ENCODE measurements at regions of chr7 and their contacts with region 1.

Region 1: DNA sequence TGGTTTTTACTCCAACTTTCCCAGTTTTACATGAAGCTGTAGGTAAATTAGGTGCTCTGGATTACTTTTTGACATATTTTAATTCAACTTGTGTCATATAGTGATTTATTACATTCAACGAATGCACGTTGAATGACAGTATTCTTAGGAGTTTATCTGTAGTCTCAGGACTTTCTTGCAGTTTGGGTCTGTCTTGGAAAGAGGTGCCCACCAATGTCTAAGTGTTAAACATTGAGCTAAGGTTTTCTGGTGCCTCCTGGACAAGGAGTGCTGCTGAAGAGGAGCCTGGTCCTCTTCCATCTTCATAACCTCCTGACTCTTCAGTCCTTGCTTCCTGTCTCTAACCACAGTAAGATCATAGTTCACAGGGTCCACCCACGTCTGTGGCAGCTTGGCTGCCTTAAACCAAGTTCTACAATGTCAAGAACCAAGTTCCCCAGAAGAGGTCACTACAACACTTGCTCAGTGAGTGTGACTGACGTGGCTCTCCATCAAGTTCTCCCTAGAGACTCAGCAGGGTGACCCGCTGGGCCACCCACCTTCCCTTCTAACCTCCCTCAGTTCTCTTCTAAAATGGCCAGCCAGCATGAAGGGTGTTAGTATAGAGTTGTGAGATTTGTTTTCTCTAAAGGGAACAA is 6.1 kb downstream of the NPY start:
- DNase-seq: peak; percentile 38 to 40
- H3K4me3 ChIP-seq: no peak overlapping the region
- H3K27ac ChIP-seq: no peak overlapping the region
- H3K4me1 ChIP-seq: peaks cover 0 to 2% of the 10 kb centered on the region in 2 donors
- H3K27me3 ChIP-seq: no peaks in the 10 kb centered on the region
- CTCF ChIP-seq: peak in 5 of 6 experiments; percentile 17 to 62 (median 58)
- POLR2A ChIP-seq: no peak

Region 2: DNA sequence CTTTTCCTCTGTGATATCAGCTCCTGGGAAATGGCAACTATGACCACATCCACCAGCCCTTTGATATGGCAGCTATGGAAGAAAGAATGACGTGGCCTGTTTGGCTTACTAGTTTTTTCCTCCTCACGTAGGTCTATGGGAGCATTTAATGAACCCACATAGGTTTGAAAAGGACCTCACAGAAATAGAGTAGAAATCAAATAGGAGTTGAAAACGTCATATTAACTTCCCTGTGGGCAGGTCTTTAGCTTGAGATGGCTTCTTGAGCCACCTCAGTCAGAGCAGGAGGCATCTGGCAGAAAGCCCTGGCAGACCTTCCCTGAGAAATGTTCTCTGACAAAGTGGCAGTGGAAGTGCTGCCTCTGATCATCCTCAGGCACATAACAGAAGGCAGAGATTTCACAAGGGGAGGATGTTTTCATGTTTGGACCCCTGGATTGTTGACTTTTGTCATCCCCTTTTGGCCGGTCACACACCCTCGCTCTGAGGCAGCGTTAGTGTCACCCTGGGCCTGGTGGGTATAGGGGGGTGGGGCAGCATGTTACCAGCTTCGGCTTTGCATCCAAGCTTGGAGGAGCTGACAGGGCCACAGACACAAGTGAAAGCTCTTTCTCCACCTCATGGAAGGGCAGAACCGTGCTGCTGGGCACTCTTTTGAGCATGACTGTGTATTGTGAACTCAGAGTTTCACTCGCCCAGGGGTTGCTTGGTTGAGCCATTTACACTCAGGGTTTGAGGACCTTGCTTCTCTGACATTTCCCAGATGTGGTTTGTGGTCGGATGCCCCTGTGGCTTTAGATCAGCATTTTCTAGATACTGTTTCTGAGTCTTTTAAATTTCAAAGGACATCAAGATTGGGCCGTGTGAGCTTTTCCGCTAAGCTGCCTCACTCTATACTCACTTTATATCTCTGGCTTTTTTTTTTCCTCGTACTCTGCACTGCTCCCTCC is 395.9 kb before region 1 on chr7:
- intact Hi-C with region 1: no loop called
- DNase-seq: no peak
- H3K4me3 ChIP-seq: no peak overlapping the region
- H3K27ac ChIP-seq: no peak overlapping the region
- H3K4me1 ChIP-seq: no peaks in the 10 kb centered on the region
- H3K27me3 ChIP-seq: no peaks in the 10 kb centered on the region
- CTCF ChIP-seq: no peak
- POLR2A ChIP-seq: no peak

Region 3: DNA sequence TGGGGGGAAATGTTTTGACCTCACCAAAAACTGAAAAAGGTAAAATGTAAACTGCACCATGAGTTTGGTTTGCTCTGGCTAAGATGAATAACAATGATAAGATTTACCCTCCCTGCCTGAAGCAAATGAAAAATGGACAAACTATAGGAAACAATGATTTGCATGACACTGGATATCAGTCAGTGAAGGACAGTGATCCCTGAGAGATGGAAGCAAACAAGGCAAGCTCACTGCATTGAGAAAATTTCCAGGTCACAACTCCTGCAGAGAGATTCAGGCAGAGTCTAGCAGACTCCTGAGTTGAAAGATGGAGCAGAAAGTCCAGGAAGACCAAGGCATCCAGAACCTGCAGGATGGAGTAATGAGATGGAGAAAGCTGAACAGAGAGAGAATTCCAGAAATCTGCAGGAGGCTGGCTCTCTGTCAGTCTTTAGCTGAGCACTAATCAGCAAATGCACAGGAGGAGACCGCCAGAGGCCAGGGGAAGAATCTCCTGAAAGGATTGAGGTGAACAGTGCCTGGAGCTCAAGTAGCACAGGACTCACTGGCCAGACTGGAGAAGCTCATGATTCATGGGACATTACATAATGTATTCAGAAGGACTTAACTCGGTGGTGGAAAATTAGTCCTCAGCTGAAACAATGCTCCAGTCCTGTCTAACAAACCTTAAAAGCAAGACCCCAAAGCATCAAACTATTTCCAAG is 231.9 kb after region 1 on chr7:
- intact Hi-C with region 1: no loop called
- DNase-seq: no peak
- H3K4me3 ChIP-seq: no peak overlapping the region
- H3K27ac ChIP-seq: no peak overlapping the region
- H3K4me1 ChIP-seq: no peaks in the 10 kb centered on the region
- H3K27me3 ChIP-seq: no peaks in the 10 kb centered on the region
- CTCF ChIP-seq: no peak
- POLR2A ChIP-seq: no peak

Region 4: GRCh38 chr7:24665564-24666294 is 375.6 kb after region 1 on chr7:
- intact Hi-C with region 1: loop called (anchors 10 kb)
- DNase-seq: peak; percentile 23 to 30
- H3K4me3 ChIP-seq: no peak overlapping the region
- H3K27ac ChIP-seq: no peak overlapping the region
- H3K4me1 ChIP-seq: no peaks in the 10 kb centered on the region
- H3K27me3 ChIP-seq: no peaks in the 10 kb centered on the region
- CTCF ChIP-seq: peak; percentile 41 to 80 (median 65)
- POLR2A ChIP-seq: no peak

Measured in thyroid gland (tissue), 4 donors.